Heart right ventricle (tissue), 16 donors: ENCODE measurements at regions of chr16 and their contacts with region 1.

Region 1: GRCh38 chr16:83176802-83177201 is 550.0 kb downstream of the CDH13 start:
- DNase-seq: no peak
- ATAC-seq: no peak
- H3K4me3 ChIP-seq: no peak overlapping the region
- H3K27ac ChIP-seq: no peak overlapping the region
- H3K4me1 ChIP-seq: no peaks in the 10 kb centered on the region
- H3K27me3 ChIP-seq: no peaks in the 10 kb centered on the region
- CTCF ChIP-seq: no peak

Region 2: GRCh38 chr16:83160287-83161020 is 16.3 kb before region 1 on chr16:
- intact Hi-C with region 1: loop called in 1 of 10 experiments (anchors 1 kb)
- DNase-seq: no peak
- ATAC-seq: no peak
- H3K4me3 ChIP-seq: no peak overlapping the region
- H3K27ac ChIP-seq: no peak overlapping the region
- H3K4me1 ChIP-seq: no peaks in the 10 kb centered on the region
- H3K27me3 ChIP-seq: no peaks in the 10 kb centered on the region
- CTCF ChIP-seq: no peak